ENCODE measurements at regions of chr4 and their contacts with region 1.

Region 1: DNA sequence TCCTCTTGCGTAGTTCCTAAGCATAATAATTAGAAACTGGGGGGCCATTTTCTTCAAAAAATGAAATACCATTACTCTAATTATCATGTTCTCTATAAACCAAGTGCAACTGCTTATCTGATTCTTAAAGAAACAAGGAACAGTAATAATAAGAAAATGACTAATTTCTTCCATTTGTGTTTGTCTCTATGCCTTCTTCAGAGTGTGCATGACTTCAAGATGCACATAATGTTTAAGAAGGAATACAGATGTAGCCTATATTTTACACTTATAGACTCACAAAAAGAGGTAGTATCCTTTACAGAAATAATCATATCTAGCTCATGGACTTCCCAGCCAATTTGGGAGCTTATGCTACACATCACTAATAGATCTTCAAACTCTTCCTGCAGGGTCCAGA is 131.7 kb downstream of the CHRNA9 start:
- DNase-seq: no peak
- H3K27ac ChIP-seq: no peak overlapping the region
- CTCF ChIP-seq: no peak

Region 2: DNA sequence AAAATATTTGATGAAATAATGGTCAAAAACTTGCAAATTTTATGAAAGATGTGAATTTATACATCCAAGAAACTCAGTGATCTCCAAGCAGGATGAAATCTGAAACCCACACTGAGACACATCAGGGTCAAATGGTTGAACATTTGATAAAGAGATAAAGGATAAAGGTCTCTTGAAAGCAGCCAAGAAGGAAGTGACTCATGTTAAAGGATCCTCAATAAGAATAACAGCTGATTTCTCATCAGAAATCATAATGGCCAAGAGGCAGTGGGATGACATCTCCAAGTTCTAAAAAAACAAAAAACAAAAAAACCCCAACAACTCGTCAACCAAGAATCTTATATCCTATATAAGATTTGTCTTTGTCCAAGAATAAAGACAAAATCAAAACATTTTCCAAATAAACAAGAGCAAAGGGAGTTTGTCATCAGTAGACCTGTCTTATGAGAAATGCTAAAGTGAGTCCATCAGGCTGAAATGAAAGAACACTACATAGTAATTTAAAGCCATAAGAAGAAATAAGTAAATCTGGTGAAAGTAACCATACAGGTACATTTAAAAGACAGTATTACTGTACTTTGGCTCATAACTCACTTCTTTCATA is 610.8 kb before region 1 on chr4:
- CTCF ChIA-PET with region 1: no interaction called
- POLR2A ChIA-PET with region 1: no interaction called
- DNase-seq: peak; percentile 29
- H3K27ac ChIP-seq: no peak overlapping the region
- CTCF ChIP-seq: no peak

Region 3: GRCh38 chr4:40684404-40684803 is 217.6 kb after region 1 on chr4:
- CTCF ChIA-PET with region 1: interaction called, 11 read pairs
- POLR2A ChIA-PET with region 1: no interaction called
- DNase-seq: no peak
- H3K27ac ChIP-seq: no peak overlapping the region
- CTCF ChIP-seq: no peak